ENCODE measurements at regions of chr2 and their contacts with region 1.

Region 1: DNA sequence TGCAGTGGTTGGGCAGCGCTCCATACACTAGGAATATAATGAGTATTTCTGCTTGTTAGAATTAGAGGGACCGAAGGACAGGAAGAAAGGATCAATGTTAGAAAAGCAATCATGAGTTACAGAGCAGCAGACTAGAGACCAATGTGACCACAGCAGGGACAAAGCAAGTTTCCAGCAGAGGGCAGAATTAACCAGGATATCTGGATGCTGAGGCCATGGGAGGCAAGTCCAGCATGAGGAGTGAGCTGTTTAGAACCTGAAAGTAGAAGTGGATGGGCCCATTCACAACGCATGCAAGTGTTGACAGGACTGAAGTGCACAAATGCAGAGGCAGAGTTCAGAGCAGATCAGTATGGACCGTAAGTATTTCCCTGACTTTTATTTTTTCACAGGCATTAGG is 910.4 kb upstream of the GYPC start:
- DNase-seq: peak in 2 of 6 donors; percentile 13 to 37
- ATAC-seq: peak in 3 of 4 donors; percentile 81 to 83 (median 81)
- H3K4me3 ChIP-seq: no peak overlapping the region
- H3K27ac ChIP-seq: no peak overlapping the region
- H3K4me1 ChIP-seq: no peaks in the 10 kb centered on the region
- H3K27me3 ChIP-seq: no peaks in the 10 kb centered on the region
- CTCF ChIP-seq: peak in 2 of 4 donors; percentile 20 to 23

Region 2: DNA sequence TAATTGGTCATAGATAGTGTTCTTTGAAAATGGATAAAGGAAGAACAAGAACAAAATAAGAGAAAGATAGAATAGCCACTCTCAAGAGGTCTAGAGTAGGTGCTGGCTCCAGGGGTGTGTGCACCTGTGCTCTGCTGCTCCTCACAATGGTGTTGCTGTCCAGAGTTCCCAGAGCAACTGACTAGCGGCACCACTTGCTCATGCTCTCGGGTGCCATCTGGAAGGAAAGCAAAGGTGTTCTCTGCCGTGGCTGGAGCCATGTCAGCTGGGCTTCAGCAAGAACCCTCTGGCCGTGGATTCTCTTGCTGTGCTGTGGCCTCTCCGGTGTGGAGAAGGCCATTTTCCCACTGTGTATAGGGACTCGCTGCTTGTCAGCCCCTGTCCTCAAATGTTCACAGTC is 1038.5 kb after region 1 on chr2:
- intact Hi-C with region 1: loop called in 1 of 3 experiments (anchors 10 kb)
- DNase-seq: peak in 1 of 6 donors; percentile 7
- ATAC-seq: no peak
- H3K4me3 ChIP-seq: no peak overlapping the region
- H3K27ac ChIP-seq: no peak overlapping the region
- H3K4me1 ChIP-seq: no peaks in the 10 kb centered on the region
- H3K27me3 ChIP-seq: no peaks in the 10 kb centered on the region
- CTCF ChIP-seq: no peak

Measured in pancreas (tissue), 10 donors.